ENCODE measurements at regions of chr16 and their contacts with region 1.

Region 1: GRCh38 chr16:82892324-82892723 is 265.6 kb downstream of the CDH13 start:
- DNase-seq: no peak
- ATAC-seq: no peak
- H3K4me3 ChIP-seq: no peak overlapping the region
- H3K27ac ChIP-seq: no peak overlapping the region
- H3K4me1 ChIP-seq: peaks cover 7 to 10% of the 10 kb centered on the region in 2 donors
- H3K27me3 ChIP-seq: no peaks in the 10 kb centered on the region

Region 2: DNA sequence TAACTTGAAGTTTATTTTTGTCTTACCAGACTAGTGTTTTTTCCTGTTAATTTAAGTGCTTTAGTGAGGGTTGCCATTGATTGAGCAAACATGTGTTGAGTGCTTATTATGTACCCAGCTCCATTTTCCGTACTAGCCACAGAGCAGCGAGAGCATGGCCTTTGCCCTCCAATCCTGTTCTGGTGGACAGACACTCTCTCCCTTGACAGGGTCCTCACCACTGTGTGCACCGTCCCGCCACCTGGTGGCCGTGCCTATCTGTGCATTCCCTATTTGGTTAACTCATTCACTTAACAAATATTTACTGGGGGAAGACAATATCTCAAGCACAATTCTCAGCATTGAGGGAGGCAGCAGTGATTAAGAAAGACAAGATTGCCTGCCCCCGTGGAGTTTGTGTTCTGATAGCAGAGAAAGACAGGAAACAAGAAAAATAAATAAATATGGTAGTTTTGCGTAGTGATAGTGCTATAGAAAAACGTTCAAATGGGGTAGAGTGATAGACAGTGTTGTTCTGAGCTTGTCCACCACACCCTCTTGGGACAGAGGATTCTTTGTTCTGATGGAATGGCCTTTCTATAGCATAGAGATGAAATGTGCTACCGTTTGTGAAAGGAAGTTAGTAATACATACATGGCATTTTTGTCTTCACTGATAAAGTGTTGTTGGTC is 252.5 kb before region 1 on chr16:
- intact Hi-C with region 1: loop called in 1 of 2 experiments (anchors 10 kb)
- DNase-seq: peak in 1 of 2 donors; percentile 80
- ATAC-seq: no peak
- H3K4me3 ChIP-seq: no peak overlapping the region
- H3K27ac ChIP-seq: no peak overlapping the region
- H3K4me1 ChIP-seq: no peaks in the 10 kb centered on the region
- H3K27me3 ChIP-seq: no peaks in the 10 kb centered on the region

Region 3: DNA sequence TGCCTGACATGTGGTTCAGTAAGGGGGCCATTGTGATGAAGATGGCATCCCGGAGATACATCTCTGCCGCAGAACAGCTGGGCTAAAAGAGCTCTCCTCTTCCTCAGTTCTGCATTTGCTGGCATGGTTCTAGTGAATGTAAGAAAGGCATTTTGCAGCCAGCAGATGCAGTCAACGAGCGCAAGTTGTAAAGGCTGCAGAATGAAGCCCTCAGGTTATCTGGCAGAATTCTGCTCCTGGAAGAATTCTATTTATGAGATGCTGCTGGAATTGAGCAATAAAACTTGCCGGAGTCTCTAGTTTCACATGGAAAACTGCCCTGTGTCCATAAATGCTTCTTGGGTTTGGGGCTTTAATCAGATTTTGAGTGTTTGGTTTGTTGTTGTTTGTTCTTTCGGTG is 738.7 kb after region 1 on chr16:
- intact Hi-C with region 1: no loop called
- DNase-seq: no peak
- ATAC-seq: no peak
- H3K4me3 ChIP-seq: no peak overlapping the region
- H3K27ac ChIP-seq: no peak overlapping the region
- H3K4me1 ChIP-seq: no peaks in the 10 kb centered on the region
- H3K27me3 ChIP-seq: no peaks in the 10 kb centered on the region

Measured in aorta (tissue), 5 donors.